ENCODE measurements at regions of chr10 and their contacts with region 1.

Region 1: GRCh38 chr10:106705681-106706100 is 458.8 kb downstream of the SORCS1 start:
- DNase-seq: peak; percentile 64
- H3K4me3 Mint-ChIP-seq: no peak overlapping the region
- H3K27ac Mint-ChIP-seq: no peak overlapping the region
- H3K4me1 Mint-ChIP-seq: no peaks in the 10 kb centered on the region
- H3K27me3 Mint-ChIP-seq: peaks cover 1% of the 10 kb centered on the region

Region 2: DNA sequence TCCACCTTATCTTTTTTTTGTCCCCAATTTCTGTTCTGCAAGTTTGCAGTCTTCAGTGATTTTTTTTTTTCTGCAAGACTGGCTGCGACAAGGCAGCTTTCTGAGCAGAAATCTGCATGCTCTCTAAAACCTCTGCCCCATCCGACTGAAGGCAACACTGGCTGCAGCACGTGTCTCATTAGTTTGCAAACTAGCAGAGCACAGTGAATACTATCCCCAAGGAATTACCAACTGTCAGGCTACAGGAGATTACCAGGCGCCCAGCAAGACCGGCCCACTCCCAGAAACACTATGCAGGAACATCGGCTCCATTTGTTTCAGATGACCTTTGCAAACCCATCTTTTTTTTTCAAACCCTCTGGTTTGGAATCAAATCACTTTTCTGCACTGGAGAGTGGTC is 79.9 kb before region 1 on chr10:
- CTCF ChIA-PET with region 1: interaction called, 4 read pairs
- intact Hi-C with region 1: loop called (anchors 10 kb)
- DNase-seq: no peak
- H3K4me3 Mint-ChIP-seq: no peak overlapping the region
- H3K27ac Mint-ChIP-seq: no peak overlapping the region
- H3K4me1 Mint-ChIP-seq: no peaks in the 10 kb centered on the region
- H3K27me3 Mint-ChIP-seq: peaks cover 3% of the 10 kb centered on the region